GM10248 (cell line): ENCODE measurements at regions of chr15 and their contacts with region 1.

Region 1: GRCh38 chr15:48205981-48206380 is at the start of gene SLC12A1:
- DNase-seq: no peak
- CTCF ChIP-seq: no peak

Region 2: DNA sequence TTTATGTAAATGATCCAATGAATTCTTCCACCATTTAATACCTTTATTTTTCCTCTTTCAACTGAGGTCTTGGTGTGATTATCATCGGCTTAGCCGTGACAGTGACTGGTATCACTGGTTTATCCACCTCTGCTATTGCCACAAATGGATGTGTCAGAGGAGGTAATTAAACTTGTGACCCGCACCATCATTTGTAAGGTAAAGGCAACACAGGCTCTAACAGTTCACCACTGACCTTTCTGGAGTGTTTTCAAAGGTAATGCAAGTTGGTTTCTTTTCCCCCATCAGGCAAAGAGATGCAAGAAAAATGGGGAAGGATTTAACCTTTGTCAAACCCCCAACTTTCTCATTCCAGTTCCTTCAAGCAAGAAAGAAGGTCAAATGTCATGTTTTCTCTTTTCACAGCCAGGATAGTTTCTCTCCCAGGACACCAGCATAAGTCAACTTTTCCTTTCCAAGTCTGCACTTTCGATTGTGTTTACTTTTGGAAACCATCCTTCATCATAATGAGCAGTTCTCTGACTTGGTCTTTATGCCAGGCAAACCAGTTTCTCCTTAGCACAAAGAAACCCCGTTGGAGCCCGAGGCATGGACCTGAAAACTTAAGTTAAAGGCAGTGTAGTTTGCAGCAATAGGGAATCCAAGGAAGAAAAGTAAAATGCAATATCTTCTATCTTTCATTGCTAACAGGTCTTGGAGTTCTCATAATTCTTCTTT is 20.0 kb after region 1 on chr15:
- CTCF ChIA-PET with region 1: interaction called, 11 read pairs
- POLR2A ChIA-PET with region 1: no interaction called
- DNase-seq: no peak
- CTCF ChIP-seq: no peak

Region 3: GRCh38 chr15:48703544-48703943 is 497.6 kb after region 1 on chr15:
- CTCF ChIA-PET with region 1: no interaction called
- POLR2A ChIA-PET with region 1: no interaction called
- DNase-seq: no peak
- CTCF ChIP-seq: no peak